Activated B cell treated with CpG ODN at 0.5 μM for 24 hours (primary cell): ENCODE measurements at regions of chr9 and their contacts with region 1.

Region 1: DNA sequence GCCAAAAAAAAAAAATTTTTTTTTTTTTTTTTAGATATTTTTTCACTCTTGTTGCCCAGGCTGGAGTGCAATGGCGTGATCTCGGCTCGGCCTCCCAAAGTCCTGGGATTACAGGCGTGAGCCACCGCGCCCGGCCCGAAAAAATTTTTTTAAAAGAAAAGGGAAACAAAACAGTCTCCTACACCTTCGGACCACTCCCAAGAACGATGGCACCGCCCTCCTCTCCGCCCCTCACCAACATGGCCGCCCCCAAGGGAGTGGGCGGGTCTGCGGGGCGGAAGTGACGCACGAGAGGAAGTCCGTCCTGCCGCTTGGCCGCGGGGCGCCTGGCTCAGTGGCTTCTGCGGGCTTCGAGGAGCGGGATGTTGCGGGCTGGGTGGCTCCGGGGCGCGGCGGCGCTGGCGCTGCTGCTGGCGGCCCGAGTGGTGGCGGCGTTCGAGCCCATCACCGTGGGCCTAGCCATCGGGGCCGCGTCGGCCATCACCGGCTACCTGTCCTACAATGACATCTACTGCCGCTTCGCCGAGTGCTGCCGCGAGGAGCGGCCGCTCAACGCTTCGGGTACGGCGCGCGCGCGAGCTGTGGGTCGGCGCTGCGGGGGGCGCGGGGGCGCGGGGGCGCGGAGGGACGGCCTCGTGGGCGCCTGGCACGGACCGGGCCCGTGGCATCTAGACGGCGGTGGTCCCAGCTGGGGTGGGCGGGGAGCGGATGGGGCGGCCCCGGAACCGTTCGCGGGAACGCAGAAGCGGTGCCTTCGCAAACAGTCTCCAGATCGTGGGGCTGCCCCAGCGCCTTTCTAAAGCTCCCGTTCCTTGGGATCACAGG is at the start of gene TOR1B:
- DNase-seq: peak; percentile 99
- ATAC-seq: peak; percentile 95
- H3K4me3 Mint-ChIP-seq: peak within 1 kb of the TSS; percentile 92
- H3K27ac Mint-ChIP-seq: peak within 1 kb of the TSS; percentile 93
- H3K4me1 Mint-ChIP-seq: peaks cover 22% of the 10 kb centered on the region
- H3K27me3 Mint-ChIP-seq: no peaks in the 10 kb centered on the region
- CTCF ChIP-seq: no peak
- total RNA-seq, gene TOR1B: 11.8 and 15.3 TPM in 2 replicates

Region 2: DNA sequence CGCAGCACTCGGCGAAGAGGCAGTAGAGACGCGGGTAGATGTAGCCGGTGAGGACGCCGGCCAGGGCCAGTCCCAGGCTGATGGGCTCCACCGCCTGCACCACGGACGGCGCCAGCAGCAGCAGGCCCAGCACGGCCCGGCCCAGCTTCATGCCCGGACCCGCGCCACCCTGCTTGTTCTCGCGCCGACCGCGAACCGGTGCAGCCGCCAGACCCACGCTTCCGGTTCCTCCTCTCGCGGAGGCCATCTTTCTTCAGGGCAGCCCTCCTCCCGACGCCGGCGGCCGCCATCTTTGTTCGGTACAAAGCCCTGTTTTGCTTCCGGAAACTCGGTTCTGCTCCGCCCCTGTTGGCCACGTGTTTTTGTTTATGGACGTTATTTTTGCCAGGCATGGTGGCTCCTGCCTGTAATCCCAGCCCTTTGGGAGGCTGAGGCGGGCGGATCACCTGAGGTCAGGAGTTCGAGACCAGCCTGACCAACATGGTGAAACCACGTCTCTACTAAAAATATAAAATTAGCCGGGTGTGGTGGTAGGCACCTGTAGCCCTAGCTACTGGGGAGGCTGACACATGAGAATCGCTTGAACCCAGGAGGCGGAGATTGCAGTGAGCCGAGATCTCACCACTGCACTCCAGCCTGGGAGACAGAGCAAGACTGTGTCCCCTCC is 21.0 kb after region 1 on chr9 and contains the start of gene TOR1A:
- CTCF ChIA-PET with region 1: no interaction called
- POLR2A ChIA-PET with region 1: interaction called, 10 read pairs
- intact Hi-C with region 1: loop called (anchors 1 kb)
- DNase-seq: peak; percentile 84
- ATAC-seq: peak; percentile 92
- H3K4me3 Mint-ChIP-seq: peak within 1 kb of the TSS; percentile 85
- H3K27ac Mint-ChIP-seq: peak within 1 kb of the TSS; percentile 76
- H3K4me1 Mint-ChIP-seq: peaks cover 13% of the 10 kb centered on the region
- H3K27me3 Mint-ChIP-seq: no peaks in the 10 kb centered on the region
- CTCF ChIP-seq: no peak
- total RNA-seq, gene TOR1A: 28.5 and 29.5 TPM in 2 replicates

Region 3: GRCh38 chr9:129835021-129835871 is 32.2 kb after region 1 on chr9 and contains the starts of genes C9orf78 and USP20:
- CTCF ChIA-PET with region 1: no interaction called
- POLR2A ChIA-PET with region 1: interaction called, 7 read pairs
- intact Hi-C with region 1: loop called (anchors 1 kb)
- DNase-seq: peak; percentile 97
- ATAC-seq: peak; percentile 96
- H3K4me3 Mint-ChIP-seq: peak within 1 kb of the TSS; percentile 99
- H3K27ac Mint-ChIP-seq: peak within 1 kb of the TSS; percentile 98
- H3K4me1 Mint-ChIP-seq: peaks cover 46% of the 10 kb centered on the region
- H3K27me3 Mint-ChIP-seq: no peaks in the 10 kb centered on the region
- CTCF ChIP-seq: no peak
- total RNA-seq, gene C9orf78: 34.1 and 42.7 TPM in 2 replicates
- total RNA-seq, gene USP20: 28.1 and 31.6 TPM in 2 replicates

Region 4: DNA sequence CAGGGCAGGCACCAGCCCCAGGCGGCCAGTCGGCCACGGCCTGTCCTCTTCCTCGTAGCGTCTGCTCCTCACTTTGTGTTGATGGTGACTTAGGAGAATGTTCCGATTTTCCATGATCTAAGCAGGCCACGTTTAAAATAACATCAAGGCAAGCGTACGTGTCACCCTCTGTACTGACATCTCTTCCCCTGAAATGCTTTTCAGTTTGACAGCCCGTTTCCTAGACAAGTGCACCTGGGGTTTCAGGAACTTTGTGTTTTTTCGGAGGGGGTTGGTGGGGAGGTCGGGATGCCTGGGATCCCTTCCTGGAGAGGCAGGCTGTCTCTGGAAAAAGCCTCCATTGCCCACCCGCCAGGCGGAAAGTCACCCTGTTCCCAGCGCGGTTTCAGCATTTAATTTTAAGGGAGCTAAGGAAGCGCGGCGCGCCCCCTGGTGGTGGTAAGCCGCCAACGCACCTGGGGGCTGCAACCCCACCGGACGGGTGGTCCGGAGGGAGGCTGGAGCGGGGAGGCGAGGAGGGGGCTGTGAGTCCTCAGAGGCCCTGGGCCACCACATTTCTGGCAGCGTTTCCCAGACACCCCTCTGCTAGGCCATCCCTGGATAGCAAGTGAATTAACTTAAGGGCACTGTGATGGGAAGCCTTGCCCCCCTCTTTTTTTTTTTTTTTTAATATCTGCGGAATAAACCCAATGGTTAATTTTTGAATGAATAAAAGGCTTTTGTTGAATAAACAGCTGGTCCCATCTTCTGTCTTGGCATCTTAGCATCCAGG is 433.0 kb after region 1 on chr9:
- CTCF ChIA-PET with region 1: no interaction called
- POLR2A ChIA-PET with region 1: no interaction called
- intact Hi-C with region 1: loop called (anchors 5 kb)
- DNase-seq: peak; percentile 70
- ATAC-seq: no peak
- H3K4me3 Mint-ChIP-seq: no peak overlapping the region
- H3K27ac Mint-ChIP-seq: no peak overlapping the region
- H3K4me1 Mint-ChIP-seq: peaks cover 28% of the 10 kb centered on the region
- H3K27me3 Mint-ChIP-seq: peaks cover 3% of the 10 kb centered on the region
- CTCF ChIP-seq: peak; percentile 92

Region 5: DNA sequence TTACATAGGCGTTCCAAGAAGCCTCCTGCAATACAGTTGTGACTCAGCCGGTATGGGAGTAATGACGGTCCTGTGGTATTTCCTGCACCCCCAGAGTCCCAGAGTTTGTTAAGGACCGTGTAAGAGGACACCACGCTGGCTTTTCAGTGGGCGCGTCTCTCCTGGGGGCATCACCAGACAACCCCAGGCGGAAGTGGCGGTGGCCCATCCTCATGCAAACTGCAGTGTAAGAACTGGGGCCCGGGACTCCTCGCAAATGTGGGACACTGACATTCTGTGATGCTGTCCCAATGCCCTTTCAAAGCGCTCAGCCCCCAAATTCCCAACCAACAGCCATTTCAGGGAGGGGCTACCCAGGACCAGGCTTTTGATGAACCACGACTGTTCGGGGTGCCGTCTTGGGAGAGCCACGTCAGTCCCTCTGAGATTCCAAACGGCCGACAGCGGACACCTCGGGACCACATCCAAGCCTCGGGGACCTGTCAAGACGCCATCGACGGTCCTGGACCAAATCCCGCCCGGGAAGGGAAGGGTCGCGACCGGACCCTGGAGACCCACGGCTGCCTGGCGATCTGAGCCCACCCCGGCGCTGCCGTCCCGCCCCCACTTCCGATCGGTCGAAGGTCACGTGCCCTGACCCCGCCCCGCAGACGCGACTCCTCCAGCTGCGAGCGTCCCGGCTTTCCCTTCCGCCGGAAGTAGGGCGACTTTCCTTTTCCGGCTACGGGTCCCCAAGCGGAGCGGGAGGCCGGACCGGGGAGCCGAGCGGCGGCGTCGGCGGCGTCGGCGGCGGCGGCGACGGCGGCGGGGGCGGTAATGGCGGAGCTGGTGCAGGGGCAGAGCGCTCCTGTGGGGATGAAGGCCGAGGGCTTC is 776.0 kb after region 1 on chr9 and contains the start of gene FUBP3:
- CTCF ChIA-PET with region 1: no interaction called
- POLR2A ChIA-PET with region 1: no interaction called
- intact Hi-C with region 1: loop called (anchors 1 kb)
- DNase-seq: peak; percentile 86
- ATAC-seq: peak; percentile 85
- H3K4me3 Mint-ChIP-seq: peak within 1 kb of the TSS; percentile 91
- H3K27ac Mint-ChIP-seq: peak within 1 kb of the TSS; percentile 79
- H3K4me1 Mint-ChIP-seq: peaks cover 37% of the 10 kb centered on the region
- H3K27me3 Mint-ChIP-seq: no peaks in the 10 kb centered on the region
- CTCF ChIP-seq: no peak
- total RNA-seq, gene FUBP3: 38.6 and 44.7 TPM in 2 replicates